Activated CD4-positive, alpha-beta T cell treated with anti-CD3 and anti-CD28 coated beads, Interleukin-2, amount 10 ng/mL, durations not matched to agents 24 days and 14 days (primary cell): ENCODE measurements at regions of chr9 and their contacts with region 1.

Region 1: DNA sequence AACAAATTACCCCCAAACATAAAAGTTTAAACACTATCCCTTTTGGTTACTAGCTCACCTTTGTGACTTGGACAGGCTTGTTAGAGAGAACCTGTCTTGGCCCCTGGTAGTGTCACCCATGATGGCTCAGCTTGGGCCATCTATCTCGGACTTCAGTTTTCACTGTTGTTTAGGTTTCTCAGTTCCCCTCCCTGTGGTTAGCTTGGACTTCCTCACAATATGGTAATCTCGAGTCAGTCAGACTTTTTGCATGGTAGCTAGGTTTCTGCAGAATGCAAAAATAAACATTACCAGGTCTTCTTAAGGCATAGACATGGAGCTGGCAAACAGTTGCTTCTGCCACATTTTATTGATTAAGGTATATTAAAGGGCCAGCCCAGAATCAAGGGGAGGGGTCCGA is 324.3 kb upstream of the RORB start:
- DNase-seq: no peak
- H3K4me3 Mint-ChIP-seq: no peak overlapping the region
- H3K27ac Mint-ChIP-seq: no peak overlapping the region
- H3K4me1 Mint-ChIP-seq: no peaks in the 10 kb centered on the region
- H3K27me3 Mint-ChIP-seq: no peaks in the 10 kb centered on the region

Region 2: DNA sequence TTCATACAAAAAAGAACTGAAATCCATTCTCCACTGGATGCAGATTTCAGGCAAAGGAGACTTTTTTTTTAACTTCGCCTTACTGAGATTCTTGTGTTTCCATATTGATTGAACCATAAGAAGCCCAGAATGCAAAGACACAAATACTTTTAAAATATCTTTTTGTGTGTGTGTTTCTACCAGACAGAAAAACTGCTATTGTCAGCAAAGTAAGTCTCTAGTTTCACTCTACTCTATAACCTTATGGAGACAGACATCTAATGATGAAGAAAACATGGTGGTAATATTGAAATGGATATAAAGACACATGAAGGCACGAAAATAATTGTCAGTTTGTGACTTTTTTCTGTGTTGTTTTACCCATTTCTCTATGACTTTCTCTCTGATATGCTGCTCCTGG is 64.0 kb after region 1 on chr9:
- intact Hi-C with region 1: loop called (anchors 10 kb)
- DNase-seq: no peak
- H3K4me3 Mint-ChIP-seq: no peak overlapping the region
- H3K27ac Mint-ChIP-seq: no peak overlapping the region
- H3K4me1 Mint-ChIP-seq: no peaks in the 10 kb centered on the region
- H3K27me3 Mint-ChIP-seq: no peaks in the 10 kb centered on the region

Region 3: GRCh38 chr9:74511333-74511732 is 338.5 kb after region 1 on chr9:
- intact Hi-C with region 1: no loop called
- DNase-seq: no peak
- H3K4me3 Mint-ChIP-seq: no peak overlapping the region
- H3K27ac Mint-ChIP-seq: no peak overlapping the region
- H3K4me1 Mint-ChIP-seq: no peaks in the 10 kb centered on the region
- H3K27me3 Mint-ChIP-seq: peaks cover 4% of the 10 kb centered on the region